ENCODE measurements at regions of chr7 and their contacts with region 1.

Region 1: DNA sequence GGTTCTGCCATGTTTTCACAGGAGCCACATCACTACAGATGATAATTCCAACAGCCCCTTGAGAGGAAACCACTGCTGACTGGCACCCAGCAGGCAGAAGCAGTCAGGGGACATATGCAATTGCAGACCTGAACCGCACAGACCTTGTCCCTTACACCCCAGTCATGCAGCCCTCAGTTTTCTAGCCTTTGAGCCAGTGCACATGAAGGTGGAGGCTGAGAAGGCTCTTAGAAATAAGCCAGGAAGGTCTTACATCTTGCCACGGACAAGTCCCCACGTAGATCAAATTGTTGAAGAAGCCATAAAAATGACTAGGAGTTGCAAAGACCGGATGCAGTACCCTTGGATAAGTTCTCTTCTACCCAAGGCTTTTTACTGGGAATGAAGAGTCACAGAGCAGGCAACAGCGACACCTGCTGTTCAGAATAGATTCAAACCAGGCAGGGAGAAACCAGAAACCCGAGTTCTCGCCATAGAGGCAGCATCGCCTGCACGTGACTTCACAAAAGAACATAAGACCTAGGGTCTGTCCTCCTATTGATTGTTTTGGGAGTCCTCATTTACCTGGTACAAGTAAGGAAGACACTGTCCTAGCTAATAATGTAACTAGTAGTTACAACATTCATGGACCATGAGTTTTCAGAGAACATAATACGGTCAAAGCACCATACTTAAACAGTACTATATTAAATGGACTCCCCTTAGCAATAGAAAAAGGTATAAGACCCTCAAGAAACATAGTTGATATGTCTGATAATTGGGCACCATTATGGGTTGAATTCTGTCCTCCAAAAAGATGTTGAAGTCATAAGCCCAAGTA is 11.1 kb downstream of the STEAP1B start:
- DNase-seq: peak; percentile 77

Region 2: DNA sequence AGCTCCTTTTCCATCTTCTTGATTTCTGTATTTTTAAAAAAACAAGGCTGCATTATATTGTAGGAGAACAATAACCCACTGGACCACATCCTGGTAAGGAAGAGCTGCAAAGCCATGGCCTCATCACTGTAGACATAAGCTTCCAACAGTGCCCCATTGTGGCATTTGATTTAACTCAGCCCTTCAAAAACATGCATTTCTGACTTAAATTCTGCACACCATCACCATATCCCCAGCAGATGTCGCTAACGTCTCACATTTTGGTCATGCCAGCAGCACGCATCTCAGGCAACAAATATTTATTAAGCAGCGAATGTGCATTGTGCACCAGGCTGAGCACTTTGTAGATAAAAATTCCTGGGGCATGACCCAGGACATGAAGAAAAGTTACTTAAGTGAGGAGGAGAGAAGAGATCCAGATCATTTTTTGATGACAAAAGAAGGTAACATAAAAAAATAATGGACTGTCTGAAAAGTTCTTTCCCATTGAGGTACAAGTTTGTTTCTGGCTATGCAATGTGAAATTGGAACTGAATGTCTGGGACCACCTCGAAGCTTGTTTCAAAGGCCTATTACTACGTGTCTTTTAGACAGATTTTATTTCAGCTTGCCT is 378.5 kb before region 1 on chr7:
- CTCF ChIA-PET with region 1: interaction called, 14 read pairs
- POLR2A ChIA-PET with region 1: no interaction called
- DNase-seq: peak; percentile 69

Measured in HEK293T (cell line).